Naive thymus-derived CD4-positive, alpha-beta T cell (primary cell): ENCODE measurements at regions of chr6 and their contacts with region 1.

Region 1: GRCh38 chr6:41545703-41546474 is at the start of gene FOXP4:
- DNase-seq: peak; percentile 45 to 83 (median 76)
- ATAC-seq: peak; percentile 95
- H3K4me3 ChIP-seq: peak within 1 kb of the TSS; percentile 64
- H3K4me3 Mint-ChIP-seq: peak within 1 kb of the TSS; percentile 91 to 96 (median 94)
- H3K27ac ChIP-seq: peak within 1 kb of the TSS; percentile 19
- H3K27ac Mint-ChIP-seq: peak within 1 kb of the TSS in 8 of 9 donors; percentile 7 to 86 (median 66)
- H3K4me1 ChIP-seq: peaks cover 20 to 27% of the 10 kb centered on the region in 2 donors
- H3K4me1 Mint-ChIP-seq: peaks cover 6 to 42% (median 25%) of the 10 kb centered on the region in 7 donors
- H3K27me3 ChIP-seq: peaks cover 2 to 9% of the 10 kb centered on the region in 2 donors
- H3K27me3 Mint-ChIP-seq: peaks cover 10 to 73% (median 16%) of the 10 kb centered on the region in 5 donors
- total RNA-seq, gene FOXP4: 3.1 to 7.6 (median 4.9) TPM

Region 2: GRCh38 chr6:41200296-41200900 is 345.5 kb before region 1 on chr6:
- CTCF ChIA-PET with region 1: no interaction called
- POLR2A ChIA-PET with region 1: no interaction called
- intact Hi-C with region 1: loop called (anchors 5 kb)
- DNase-seq: peak; percentile 34 to 87 (median 78)
- ATAC-seq: peak; percentile 79
- H3K4me3 ChIP-seq: peak overlapping the region; percentile 26
- H3K4me3 Mint-ChIP-seq: peak overlapping the region; percentile 76 to 84 (median 82)
- H3K27ac ChIP-seq: peak overlapping the region; percentile 88
- H3K27ac Mint-ChIP-seq: peak overlapping the region; percentile 95 to 100 (median 98)
- H3K4me1 ChIP-seq: peaks cover 47 to 55% of the 10 kb centered on the region in 2 donors
- H3K4me1 Mint-ChIP-seq: peaks cover 52 to 93% (median 83%) of the 10 kb centered on the region in 7 donors
- H3K27me3 ChIP-seq: no peaks in the 10 kb centered on the region
- H3K27me3 Mint-ChIP-seq: no peaks in the 10 kb centered on the region

Region 3: GRCh38 chr6:41531591-41532582 is 14.0 kb before region 1 on chr6:
- CTCF ChIA-PET with region 1: no interaction called
- POLR2A ChIA-PET with region 1: interaction called, 4 read pairs
- intact Hi-C with region 1: loop called (anchors 1 kb)
- DNase-seq: peak in 8 of 9 donors; percentile 8 to 71 (median 36)
- ATAC-seq: peak; percentile 76
- H3K4me3 ChIP-seq: peak overlapping the region; percentile 56
- H3K4me3 Mint-ChIP-seq: peak overlapping the region; percentile 73 to 97 (median 84)
- H3K27ac ChIP-seq: no peak overlapping the region
- H3K27ac Mint-ChIP-seq: peak overlapping the region; percentile 25 to 95 (median 72)
- H3K4me1 ChIP-seq: peaks cover 16 to 23% of the 10 kb centered on the region in 2 donors
- H3K4me1 Mint-ChIP-seq: peaks cover 22 to 35% (median 31%) of the 10 kb centered on the region in 7 donors
- H3K27me3 ChIP-seq: no peaks in the 10 kb centered on the region
- H3K27me3 Mint-ChIP-seq: peaks cover 0 to 83% (median 9%) of the 10 kb centered on the region in 5 donors

Region 4: GRCh38 chr6:41591859-41592502 is 46.1 kb after region 1 on chr6:
- CTCF ChIA-PET with region 1: interaction called, 3 read pairs
- POLR2A ChIA-PET with region 1: no interaction called
- intact Hi-C with region 1: loop called in 1 of 2 experiments (anchors 1 kb)
- DNase-seq: peak; percentile 48 to 79 (median 71)
- ATAC-seq: peak; percentile 81
- H3K4me3 ChIP-seq: no peak overlapping the region
- H3K4me3 Mint-ChIP-seq: no peak overlapping the region
- H3K27ac ChIP-seq: no peak overlapping the region
- H3K27ac Mint-ChIP-seq: no peak overlapping the region
- H3K4me1 ChIP-seq: peaks cover 0 to 5% of the 10 kb centered on the region in 2 donors
- H3K4me1 Mint-ChIP-seq: peaks cover 0 to 4% (median 0%) of the 10 kb centered on the region in 7 donors
- H3K27me3 ChIP-seq: no peaks in the 10 kb centered on the region
- H3K27me3 Mint-ChIP-seq: no peaks in the 10 kb centered on the region

Region 5: DNA sequence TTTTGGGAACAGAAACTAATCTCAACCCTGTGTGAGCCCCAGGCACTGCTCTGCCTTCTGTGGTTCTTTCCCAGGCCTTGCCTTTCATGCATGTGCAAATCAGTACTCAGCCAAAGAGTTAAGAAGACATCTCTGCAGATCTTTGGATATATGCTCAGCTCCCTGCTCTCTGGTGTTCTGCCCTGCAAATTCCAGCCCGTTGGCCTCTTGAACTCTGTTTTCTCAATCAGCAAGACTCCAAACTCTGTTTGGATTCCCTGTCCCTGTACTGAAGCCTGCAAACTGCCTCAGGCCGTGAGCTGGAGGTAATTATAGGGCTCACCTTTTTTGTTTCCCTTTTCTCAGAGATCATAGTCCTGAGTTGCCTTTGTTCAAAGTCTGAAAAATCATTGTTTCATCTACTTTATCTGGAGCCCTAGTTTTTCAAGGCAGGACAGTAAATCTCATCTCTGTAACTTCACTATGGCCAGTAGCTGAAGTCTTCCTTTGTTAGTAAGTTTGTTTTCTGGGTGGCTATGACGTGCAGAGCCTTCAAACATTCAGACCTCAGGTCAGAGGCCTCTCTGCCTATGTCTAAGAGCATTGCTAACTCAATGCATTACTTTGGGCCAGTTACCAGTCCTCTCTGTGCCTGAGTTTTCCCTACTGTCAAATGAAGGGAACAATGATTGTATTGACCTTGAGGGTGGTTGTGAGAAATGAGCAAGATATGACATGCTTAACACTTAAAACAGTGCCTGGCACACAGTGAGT is 76.5 kb after region 1 on chr6:
- CTCF ChIA-PET with region 1: no interaction called
- POLR2A ChIA-PET with region 1: no interaction called
- intact Hi-C with region 1: no loop called
- DNase-seq: no peak
- ATAC-seq: no peak
- H3K4me3 ChIP-seq: no peak overlapping the region
- H3K4me3 Mint-ChIP-seq: no peak overlapping the region
- H3K27ac ChIP-seq: no peak overlapping the region
- H3K27ac Mint-ChIP-seq: no peak overlapping the region
- H3K4me1 ChIP-seq: peaks cover 0 to 13% of the 10 kb centered on the region in 2 donors
- H3K4me1 Mint-ChIP-seq: peaks cover 10 to 17% (median 12%) of the 10 kb centered on the region in 7 donors
- H3K27me3 ChIP-seq: peaks cover 0 to 2% of the 10 kb centered on the region in 2 donors
- H3K27me3 Mint-ChIP-seq: peaks cover 0 to 26% (median 15%) of the 10 kb centered on the region in 5 donors

Region 6: GRCh38 chr6:41895300-41896233 is 349.7 kb after region 1 on chr6 and contains the start of gene USP49:
- CTCF ChIA-PET with region 1: no interaction called
- POLR2A ChIA-PET with region 1: no interaction called
- intact Hi-C with region 1: loop called in 1 of 2 experiments (anchors 5 kb)
- DNase-seq: peak; percentile 83 to 92 (median 90)
- ATAC-seq: peak; percentile 97
- H3K4me3 ChIP-seq: peak within 1 kb of the TSS; percentile 69
- H3K4me3 Mint-ChIP-seq: peak within 1 kb of the TSS in 1 of 10 donors; percentile 94
- H3K27ac ChIP-seq: peak within 1 kb of the TSS; percentile 76
- H3K27ac Mint-ChIP-seq: peak within 1 kb of the TSS in 7 of 9 donors; percentile 78 to 97 (median 93)
- H3K4me1 ChIP-seq: peaks cover 14 to 26% of the 10 kb centered on the region in 2 donors
- H3K4me1 Mint-ChIP-seq: peaks cover 5 to 17% (median 11%) of the 10 kb centered on the region in 7 donors
- H3K27me3 ChIP-seq: no peaks in the 10 kb centered on the region
- H3K27me3 Mint-ChIP-seq: peaks cover 0 to 7% (median 0%) of the 10 kb centered on the region in 5 donors
- total RNA-seq, gene USP49: 1.8 to 6.0 (median 3.1) TPM